Head of caudate nucleus (tissue), 42 donors: ENCODE measurements at regions of chr16 and their contacts with region 1.

Region 1: GRCh38 chr16:56102183-56102686 is 89.1 kb upstream of the GNAO1 start:
- DNase-seq: peak in 40 of 42 donors; percentile 6 to 81 (median 56)

Region 2: GRCh38 chr16:55853114-55853513 is 249.1 kb before region 1 on chr16:
- intact Hi-C with region 1: no loop called
- DNase-seq: no peak

Region 3: GRCh38 chr16:56317998-56318826 is 216.0 kb after region 1 on chr16:
- intact Hi-C with region 1: loop called (anchors 10 kb)
- DNase-seq: peak; percentile 77 to 97 (median 91)